AG04449 (cell line): ENCODE measurements at regions of chr14 and their contacts with region 1.

Region 1: DNA sequence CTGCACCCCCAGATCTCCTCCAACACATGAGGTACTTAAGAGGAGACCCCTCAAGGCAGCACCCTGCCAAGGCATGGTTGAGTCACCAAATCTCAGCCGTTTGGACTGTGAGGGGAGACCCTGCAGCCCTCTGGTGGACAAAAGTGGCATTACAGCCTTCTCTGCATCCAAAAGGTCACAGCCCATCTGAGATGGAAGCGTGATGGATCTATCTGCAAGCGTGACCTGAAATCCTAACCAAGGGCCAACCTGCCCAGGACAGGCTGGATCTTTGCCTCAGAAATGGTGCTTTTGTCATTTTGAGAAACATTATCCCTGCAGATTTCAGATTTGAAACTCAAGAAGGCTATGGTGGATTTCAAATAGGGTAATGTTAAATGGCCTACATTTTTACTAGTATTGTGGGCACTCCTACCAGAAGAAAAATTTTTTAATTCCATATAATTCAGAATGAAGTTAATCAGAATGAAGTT is 23.7 kb upstream of the DHRS4 start:
- DNase-seq: no peak
- H3K4me3 ChIP-seq: no peak overlapping the region
- CTCF ChIP-seq: peak; percentile 87

Region 2: GRCh38 chr14:23588884-23589598 is 340.8 kb before region 1 on chr14:
- CTCF ChIA-PET with region 1: interaction called, 21 read pairs
- POLR2A ChIA-PET with region 1: no interaction called
- DNase-seq: peak; percentile 44
- H3K4me3 ChIP-seq: no peak overlapping the region
- CTCF ChIP-seq: peak; percentile 96

Region 3: DNA sequence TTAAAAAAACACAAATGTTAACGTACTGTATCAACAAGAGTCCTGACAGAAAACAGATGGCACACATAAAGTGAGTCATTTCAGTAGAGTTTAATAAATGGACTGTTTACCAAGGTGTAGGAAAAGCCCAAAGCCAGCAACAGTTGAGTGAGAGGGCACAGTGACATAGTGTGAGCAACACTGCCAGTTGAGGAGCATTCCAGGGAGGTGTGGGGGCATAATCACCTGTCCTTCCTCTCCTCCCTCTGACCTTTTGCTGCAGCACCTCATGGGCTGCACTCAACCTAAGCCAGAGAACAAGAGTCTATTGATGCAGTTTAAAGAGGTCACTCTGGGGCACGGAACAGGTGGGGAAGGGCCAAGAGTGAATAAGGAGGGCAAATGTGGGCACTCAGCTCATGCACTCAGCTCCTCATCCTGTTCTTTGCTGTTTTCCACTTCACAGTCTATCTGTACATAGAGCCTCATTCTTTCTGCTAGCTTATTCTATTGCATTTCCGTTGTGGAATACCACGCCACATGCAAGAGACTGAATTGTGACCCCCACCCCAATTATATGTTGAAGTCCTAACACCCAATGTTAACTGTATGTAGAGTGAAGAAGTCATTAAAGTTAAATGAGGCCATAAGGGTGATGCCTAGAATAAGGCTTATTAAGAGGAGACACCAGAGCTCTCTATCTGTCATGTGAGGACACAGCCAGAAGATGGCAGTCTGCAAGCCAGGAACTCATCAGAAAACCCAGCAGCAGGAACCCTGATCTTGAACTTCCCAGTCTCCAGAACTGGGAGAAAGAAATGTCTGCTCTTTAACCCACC is 264.3 kb before region 1 on chr14:
- CTCF ChIA-PET with region 1: interaction called, 17 read pairs
- POLR2A ChIA-PET with region 1: no interaction called
- DNase-seq: peak; percentile 7
- H3K4me3 ChIP-seq: no peak overlapping the region
- CTCF ChIP-seq: peak; percentile 71

Region 4: GRCh38 chr14:23727566-23728335 is 202.1 kb before region 1 on chr14:
- CTCF ChIA-PET with region 1: interaction called, 18 read pairs
- POLR2A ChIA-PET with region 1: no interaction called
- DNase-seq: no peak
- H3K4me3 ChIP-seq: no peak overlapping the region
- CTCF ChIP-seq: peak; percentile 19

Region 5: GRCh38 chr14:23829736-23830502 is 99.9 kb before region 1 on chr14:
- CTCF ChIA-PET with region 1: no interaction called
- POLR2A ChIA-PET with region 1: no interaction called
- DNase-seq: peak; percentile 60
- H3K4me3 ChIP-seq: no peak overlapping the region
- CTCF ChIP-seq: no peak

Region 6: GRCh38 chr14:23916004-23916403 is 13.9 kb before region 1 on chr14:
- CTCF ChIA-PET with region 1: interaction called, 58 read pairs
- POLR2A ChIA-PET with region 1: no interaction called
- DNase-seq: no peak
- H3K4me3 ChIP-seq: no peak overlapping the region
- CTCF ChIP-seq: no peak